T-cell (primary cell): ENCODE measurements at regions of chr19 and their contacts with region 1.

Region 1: DNA sequence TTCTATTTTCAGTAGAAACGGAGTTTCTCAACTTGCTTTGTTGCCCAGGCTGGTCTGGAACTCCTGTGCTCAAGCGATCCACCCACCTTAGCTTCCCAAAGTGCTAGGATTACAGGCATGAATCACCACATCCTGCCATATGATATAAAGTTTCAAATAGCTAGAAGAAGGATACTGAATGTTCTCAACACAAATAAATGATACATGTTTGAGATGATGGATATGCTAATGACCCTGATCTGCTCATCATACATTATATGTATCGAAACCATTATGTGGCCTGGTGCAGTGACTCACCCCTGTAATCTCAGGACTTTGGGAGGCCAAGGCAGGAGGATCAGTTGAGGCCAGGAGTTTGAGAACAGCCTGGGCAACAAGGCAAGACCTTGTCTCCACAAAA is 11.5 kb downstream of the CIB3 start:
- DNase-seq: no peak
- ATAC-seq: no peak
- H3K4me3 ChIP-seq: no peak overlapping the region
- H3K4me3 Mint-ChIP-seq: no peak overlapping the region
- H3K27ac ChIP-seq: no peak overlapping the region
- H3K27ac Mint-ChIP-seq: no peak overlapping the region
- H3K4me1 ChIP-seq: no peaks in the 10 kb centered on the region
- H3K4me1 Mint-ChIP-seq: peaks cover 0 to 11% (median 3%) of the 10 kb centered on the region in 3 donors
- H3K27me3 ChIP-seq: no peaks in the 10 kb centered on the region
- H3K27me3 Mint-ChIP-seq: no peaks in the 10 kb centered on the region

Region 2: DNA sequence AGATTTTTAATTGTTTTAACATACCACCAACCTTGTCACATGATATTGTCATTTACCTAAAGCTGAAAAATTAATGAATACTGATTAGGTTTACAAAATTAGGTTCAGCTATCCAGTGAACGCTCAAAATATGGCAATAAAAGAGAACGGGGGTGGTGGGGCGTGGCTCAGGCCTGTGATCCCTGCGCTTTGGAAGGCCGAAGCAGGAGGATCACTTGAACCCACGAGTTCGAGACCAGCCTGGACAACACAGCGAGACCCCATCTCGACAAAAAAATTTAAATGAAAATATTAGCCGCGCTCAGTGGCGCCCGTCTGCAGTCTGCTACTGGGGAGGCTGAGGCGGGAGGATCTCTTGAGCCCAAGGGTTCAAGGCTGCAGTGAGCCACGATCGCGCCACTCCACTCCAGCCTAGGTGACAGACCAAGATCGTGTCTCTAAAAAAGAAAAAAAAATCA is 22.8 kb after region 1 on chr19:
- CTCF ChIA-PET with region 1: no interaction called
- POLR2A ChIA-PET with region 1: no interaction called
- DNase-seq: no peak
- ATAC-seq: no peak
- H3K4me3 ChIP-seq: peak overlapping the region; percentile 86 to 99
- H3K4me3 Mint-ChIP-seq: peak overlapping the region; percentile 99 to 100 (median 100)
- H3K27ac ChIP-seq: no peak overlapping the region
- H3K27ac Mint-ChIP-seq: peak overlapping the region; percentile 97 to 98
- H3K4me1 ChIP-seq: peaks cover 10 to 43% of the 10 kb centered on the region in 2 experiments
- H3K4me1 Mint-ChIP-seq: peaks cover 35 to 41% (median 37%) of the 10 kb centered on the region in 3 donors
- H3K27me3 ChIP-seq: peaks cover 0 to 6% of the 10 kb centered on the region in 2 experiments
- H3K27me3 Mint-ChIP-seq: peaks cover 0 to 1% of the 10 kb centered on the region in 2 donors

Region 3: GRCh38 chr19:16301999-16302694 is 140.3 kb after region 1 on chr19:
- CTCF ChIA-PET with region 1: no interaction called
- POLR2A ChIA-PET with region 1: no interaction called
- DNase-seq: no peak
- ATAC-seq: no peak
- H3K4me3 ChIP-seq: no peak overlapping the region
- H3K4me3 Mint-ChIP-seq: no peak overlapping the region
- H3K27ac ChIP-seq: no peak overlapping the region
- H3K27ac Mint-ChIP-seq: no peak overlapping the region
- H3K4me1 ChIP-seq: no peaks in the 10 kb centered on the region
- H3K4me1 Mint-ChIP-seq: peaks cover 0 to 1% (median 0%) of the 10 kb centered on the region in 3 donors
- H3K27me3 ChIP-seq: no peaks in the 10 kb centered on the region
- H3K27me3 Mint-ChIP-seq: no peaks in the 10 kb centered on the region

Region 4: GRCh38 chr19:16324384-16325160 is 162.7 kb after region 1 on chr19 and contains the start of gene KLF2:
- CTCF ChIA-PET with region 1: no interaction called
- POLR2A ChIA-PET with region 1: interaction called in 1 of 2 experiments, 11 read pairs
- DNase-seq: peak; percentile 89 to 99 (median 94)
- ATAC-seq: peak; percentile 71 to 79 (median 72)
- H3K4me3 ChIP-seq: peak within 1 kb of the TSS; percentile 89 to 95
- H3K4me3 Mint-ChIP-seq: peak within 1 kb of the TSS; percentile 62 to 98 (median 66)
- H3K27ac ChIP-seq: peak within 1 kb of the TSS; percentile 95
- H3K27ac Mint-ChIP-seq: peak within 1 kb of the TSS; percentile 75 to 79
- H3K4me1 ChIP-seq: peaks cover 26 to 48% of the 10 kb centered on the region in 2 experiments
- H3K4me1 Mint-ChIP-seq: peaks cover 42 to 59% (median 46%) of the 10 kb centered on the region in 3 donors
- H3K27me3 ChIP-seq: peaks cover 0 to 16% of the 10 kb centered on the region in 2 experiments
- H3K27me3 Mint-ChIP-seq: peaks cover 0 to 5% of the 10 kb centered on the region in 2 donors
- total RNA-seq, gene KLF2: 612 to 721 (median 621) TPM